Cardiac septum (tissue), 1 donor: ENCODE measurements at regions of chr11 and their contacts with region 1.

Region 1: DNA sequence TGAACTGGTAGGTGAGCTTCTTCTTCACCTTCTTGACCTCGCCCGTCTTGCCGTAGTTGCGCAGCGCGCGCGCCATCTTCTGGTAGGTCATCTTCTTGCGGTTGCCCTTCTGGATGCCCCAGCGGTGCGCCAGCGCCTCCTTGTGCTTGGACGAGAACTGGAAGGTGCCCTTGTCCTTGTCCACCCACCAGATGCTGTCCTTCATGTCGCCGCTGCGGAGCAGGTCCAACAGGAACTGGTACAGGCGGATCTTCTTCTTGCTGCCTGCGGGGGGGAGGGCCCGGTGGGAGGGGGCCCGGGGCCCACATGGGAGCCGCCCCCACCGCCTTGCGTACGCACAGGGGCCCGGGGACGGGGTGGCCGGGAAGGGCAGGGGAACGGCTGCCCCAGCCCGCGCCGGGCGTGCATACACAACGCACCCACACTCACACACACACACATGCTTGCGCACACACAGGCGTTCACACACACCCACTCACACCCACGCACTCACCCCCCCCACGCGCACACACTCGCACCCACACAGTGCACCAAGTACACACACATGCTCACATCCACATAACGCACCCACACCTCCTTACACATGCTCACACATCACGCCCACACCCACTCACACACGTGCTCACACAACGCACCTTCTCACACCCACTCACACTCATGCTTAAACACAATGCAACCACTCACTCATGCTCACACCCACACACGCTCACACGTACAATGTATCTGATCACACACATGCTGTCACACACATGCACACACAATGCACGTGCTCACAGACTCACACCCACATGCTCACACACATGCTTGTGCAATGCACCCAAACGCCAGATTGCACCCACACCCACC is 3.0 kb upstream of the MYBPC3 start:
- DNase-seq: peak; percentile 96

Region 2: DNA sequence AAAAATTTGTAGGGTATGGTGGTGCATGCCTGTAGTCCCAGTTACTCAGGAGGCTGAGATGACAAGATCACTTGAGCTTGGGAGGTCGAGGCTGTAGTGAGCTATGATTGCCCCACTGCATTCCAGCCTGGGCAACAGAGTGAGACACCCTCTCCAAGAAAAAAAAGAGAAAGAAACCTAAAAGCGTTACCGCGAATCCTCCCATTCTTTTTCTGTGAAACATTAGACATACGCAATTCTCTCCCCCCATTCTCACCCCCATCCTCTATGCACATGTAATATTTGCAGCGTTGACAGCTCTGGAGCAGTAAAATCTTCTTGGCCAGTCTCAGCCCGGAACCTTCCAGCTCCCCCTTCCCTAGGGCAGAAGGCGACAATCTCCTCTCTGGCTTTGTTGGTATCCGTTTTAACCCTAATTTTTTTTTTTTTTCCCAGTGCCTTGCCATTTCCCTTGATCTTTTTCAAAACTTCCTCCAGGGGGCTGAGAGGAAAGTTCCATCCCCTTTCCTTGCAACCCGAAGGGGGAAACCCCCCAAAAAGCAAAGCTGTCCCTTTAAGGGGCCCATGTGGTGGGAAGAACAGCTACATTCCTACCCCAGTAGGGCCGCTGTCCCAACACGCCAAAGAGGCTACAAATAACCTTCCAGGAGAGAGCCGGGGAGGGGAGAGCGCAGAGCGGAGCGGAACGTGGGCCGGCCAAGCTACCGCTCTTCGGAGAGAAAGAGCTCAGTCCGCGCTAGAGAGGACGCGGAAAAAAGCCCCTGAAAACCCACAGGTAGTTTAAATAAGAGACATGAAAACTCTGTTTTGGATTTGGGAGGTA is 439.0 kb before region 1 on chr11:
- intact Hi-C with region 1: loop called (anchors 10 kb)
- DNase-seq: no peak

Region 3: DNA sequence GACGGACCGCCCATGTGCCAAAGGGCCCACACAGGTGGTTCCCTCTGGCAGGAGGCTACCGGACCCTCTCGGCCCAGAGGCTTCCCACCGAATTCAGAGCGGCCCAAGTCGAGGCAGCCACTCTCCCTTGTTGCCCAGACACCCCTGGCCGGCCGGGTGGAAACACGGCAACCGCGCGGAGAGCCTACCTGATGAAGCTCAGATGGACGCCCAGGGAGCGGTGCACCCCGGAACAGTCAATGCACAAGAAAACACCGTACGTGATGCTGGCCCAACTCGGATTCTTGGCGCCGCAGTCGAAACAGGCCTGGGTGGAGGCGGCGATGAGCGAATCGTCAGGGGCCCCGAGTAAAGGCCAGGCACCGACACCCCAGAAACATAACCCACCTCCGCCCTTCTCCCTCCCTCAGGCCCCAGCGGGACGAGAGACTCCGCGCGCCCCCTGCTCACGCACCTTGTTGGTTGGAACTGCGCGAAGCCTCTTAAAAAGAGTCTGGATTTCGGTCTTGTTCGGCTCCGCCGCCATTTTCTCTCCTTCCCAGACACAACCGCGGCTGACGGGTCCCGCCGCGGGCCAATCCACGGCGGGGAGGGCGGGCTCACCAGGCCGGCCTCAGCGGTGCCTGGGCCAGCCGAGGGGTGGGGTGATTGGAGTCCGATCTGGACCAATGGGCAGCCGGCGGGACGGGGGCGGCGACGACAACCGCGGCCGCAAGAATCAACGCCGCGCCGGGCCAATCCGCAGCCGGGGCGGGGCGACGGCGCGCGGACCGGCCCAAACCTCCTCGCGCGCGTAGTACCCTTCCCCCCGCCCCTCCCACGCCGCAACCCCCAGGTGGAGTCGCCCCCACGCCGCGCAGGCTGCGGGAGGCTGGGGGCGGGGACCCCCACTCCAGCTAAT is 178.9 kb before region 1 on chr11 and contains the start of gene ARFGAP2:
- intact Hi-C with region 1: loop called (anchors 2 kb)
- DNase-seq: peak; percentile 99
- total RNA-seq, gene ARFGAP2: 72.3 TPM

Region 4: DNA sequence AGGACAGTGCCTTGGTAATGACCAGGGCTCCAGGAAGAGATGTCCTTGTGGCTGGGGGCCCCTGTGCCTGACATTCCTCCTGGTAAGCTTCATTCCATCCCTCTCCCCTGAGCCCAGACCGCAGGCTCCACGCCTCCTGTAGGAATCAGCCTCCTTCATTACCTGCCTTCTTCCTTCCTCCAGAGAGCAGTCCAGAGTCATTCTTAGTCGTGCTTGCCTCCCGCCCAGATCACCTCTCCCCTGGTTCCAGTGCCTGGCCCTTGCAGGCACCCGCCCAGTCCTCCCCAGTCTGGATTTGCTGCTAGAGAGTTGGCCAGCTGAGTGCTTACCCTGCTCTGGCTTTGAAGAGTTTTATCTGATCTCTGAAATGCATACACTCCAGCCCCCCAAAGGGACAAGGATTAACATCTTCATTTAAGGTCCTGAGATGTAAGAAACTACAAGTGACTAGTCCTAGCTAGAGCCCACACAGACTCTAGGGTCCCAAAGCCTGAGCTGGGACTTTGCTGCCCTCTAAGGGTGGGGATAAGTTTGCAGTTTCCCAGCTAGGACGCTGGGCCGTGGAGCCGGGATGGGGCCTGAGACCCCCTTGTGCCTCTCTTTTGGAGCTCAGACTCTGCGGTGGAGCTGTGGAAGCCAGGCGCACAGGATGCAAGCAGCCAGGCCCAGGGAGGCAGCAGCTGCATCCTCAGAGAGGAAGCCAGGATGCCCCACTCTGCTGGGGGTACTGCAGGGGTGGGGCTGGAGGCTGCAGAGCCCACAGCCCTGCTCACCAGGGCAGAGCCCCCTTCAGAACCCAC is 96.1 kb before region 1 on chr11:
- intact Hi-C with region 1: loop called (anchors 2 kb)
- DNase-seq: no peak

Region 5: GRCh38 chr11:47269002-47269828 is 86.3 kb before region 1 on chr11:
- intact Hi-C with region 1: loop called (anchors 5 kb)
- DNase-seq: peak; percentile 92

Region 6: GRCh38 chr11:47305734-47306483 is 49.6 kb before region 1 on chr11:
- intact Hi-C with region 1: no loop called
- DNase-seq: peak; percentile 86